K562 (cell line): ENCODE measurements at regions of chr9 and their contacts with region 1.

Region 1: GRCh38 chr9:34252670-34253459 is 74.0 kb downstream of the UBAP1 start:
- DNase-seq: peak; percentile 70 to 82 (median 76)
- ATAC-seq: peak; percentile 93
- H3K4me3 ChIP-seq: no peak overlapping the region
- H3K27ac ChIP-seq: no peak overlapping the region
- H3K4me1 ChIP-seq: peaks cover 0 to 4% of the 10 kb centered on the region in 2 experiments; a peak in 2 of 5 replicates
- H3K27me3 ChIP-seq: no peaks in the 10 kb centered on the region
- CTCF ChIP-seq: peak; percentile 72 to 88 (median 74)
- EP300 ChIP-seq: no peak
- POLR2A ChIP-seq: no peak
- RAD21 ChIP-seq: peak; percentile 40 to 73

Region 2: DNA sequence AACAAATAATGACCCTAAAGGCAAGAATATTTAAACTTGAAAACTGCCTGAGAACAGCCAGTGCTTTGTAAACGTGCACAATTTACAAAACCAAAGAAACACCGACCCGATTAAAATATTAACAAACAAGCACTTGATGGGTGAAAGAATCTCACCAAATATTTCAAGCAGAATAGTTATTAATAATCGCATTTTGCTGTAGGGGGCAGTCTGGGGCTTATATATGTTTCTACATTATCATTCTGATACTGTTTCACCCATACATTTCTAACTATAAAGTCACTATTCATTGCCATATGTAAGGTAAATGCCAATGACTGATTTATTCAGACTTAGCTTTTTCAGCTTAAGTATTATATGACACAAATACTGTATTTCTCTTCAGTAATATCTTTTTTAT is 241.9 kb before region 1 on chr9:
- CTCF ChIA-PET with region 1: interaction called, 4 read pairs
- POLR2A ChIA-PET with region 1: no interaction called
- in situ Hi-C with region 1: no loop called
- intact Hi-C with region 1: loop called (anchors 2 kb)
- DNase-seq: peak in 1 of 4 experiments; percentile 6
- ATAC-seq: 0 out of 3 replicates have a peak, but pooled peaks have one; percentile 42
- H3K4me3 ChIP-seq: no peak overlapping the region
- H3K27ac ChIP-seq: no peak overlapping the region
- H3K4me1 ChIP-seq: no peaks in the 10 kb centered on the region
- H3K27me3 ChIP-seq: no peaks in the 10 kb centered on the region
- CTCF ChIP-seq: peak; percentile 7 to 58 (median 15); a peak in 3 of 6 replicates
- EP300 ChIP-seq: no peak
- POLR2A ChIP-seq: no peak
- RAD21 ChIP-seq: peak in 1 of 2 experiments; percentile 48; a peak in 3 of 4 replicates

Region 3: DNA sequence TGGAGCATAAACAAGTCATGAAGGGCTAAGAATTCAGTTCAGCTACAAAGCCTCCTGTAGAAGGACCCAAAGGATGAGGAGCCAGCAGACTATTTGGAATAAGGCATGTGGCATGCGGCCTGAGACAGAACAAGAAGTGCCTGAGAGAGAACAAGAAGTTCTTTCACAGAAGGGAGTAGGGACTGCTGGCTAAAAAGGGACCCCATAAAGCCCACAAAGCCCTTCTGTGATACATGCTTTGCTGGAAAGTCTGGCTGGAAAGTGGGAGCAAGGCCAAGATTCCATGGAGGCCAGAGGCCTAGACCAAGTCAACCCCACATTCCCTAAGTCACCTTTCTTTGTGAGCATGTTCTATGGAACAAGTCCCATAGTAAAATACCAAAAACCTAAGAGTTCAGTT is 168.3 kb before region 1 on chr9:
- CTCF ChIA-PET with region 1: no interaction called
- POLR2A ChIA-PET with region 1: no interaction called
- in situ Hi-C with region 1: no loop called
- intact Hi-C with region 1: loop called (anchors 10 kb)
- DNase-seq: no peak
- ATAC-seq: no peak
- H3K4me3 ChIP-seq: no peak overlapping the region
- H3K27ac ChIP-seq: no peak overlapping the region
- H3K4me1 ChIP-seq: no peaks in the 10 kb centered on the region
- H3K27me3 ChIP-seq: no peaks in the 10 kb centered on the region
- CTCF ChIP-seq: no peak
- EP300 ChIP-seq: no peak
- POLR2A ChIP-seq: no peak
- RAD21 ChIP-seq: no peak

Region 4: GRCh38 chr9:34379334-34380033 is 126.6 kb after region 1 on chr9:
- CTCF ChIA-PET with region 1: no interaction called
- POLR2A ChIA-PET with region 1: no interaction called
- in situ Hi-C with region 1: no loop called
- intact Hi-C with region 1: loop called (anchors 2 kb)
- DNase-seq: peak; percentile 75 to 86 (median 80)
- ATAC-seq: peak; percentile 63
- H3K4me3 ChIP-seq: no peak overlapping the region
- H3K27ac ChIP-seq: no peak overlapping the region; the same call in 2 of the 3 replicates
- H3K4me1 ChIP-seq: peaks cover 9 to 39% of the 10 kb centered on the region in 2 experiments; a peak in 4 of 5 replicates
- H3K27me3 ChIP-seq: no peaks in the 10 kb centered on the region
- CTCF ChIP-seq: peak; percentile 85 to 97 (median 90)
- EP300 ChIP-seq: no peak
- POLR2A ChIP-seq: no peak
- RAD21 ChIP-seq: peak; percentile 64 to 80